ENCODE measurements at regions of chr4 and their contacts with region 1.

Region 1: GRCh38 chr4:52510939-52511565 is 148.0 kb downstream of the USP46 start:
- DNase-seq: no peak
- ATAC-seq: no peak
- H3K4me3 ChIP-seq: no peak overlapping the region
- H3K27ac ChIP-seq: no peak overlapping the region
- H3K4me1 ChIP-seq: no peaks in the 10 kb centered on the region
- H3K27me3 ChIP-seq: peaks cover 5% of the 10 kb centered on the region
- CTCF ChIP-seq: no peak
- POLR2A ChIP-seq: no peak
- RAD21 ChIP-seq: no peak

Region 2: DNA sequence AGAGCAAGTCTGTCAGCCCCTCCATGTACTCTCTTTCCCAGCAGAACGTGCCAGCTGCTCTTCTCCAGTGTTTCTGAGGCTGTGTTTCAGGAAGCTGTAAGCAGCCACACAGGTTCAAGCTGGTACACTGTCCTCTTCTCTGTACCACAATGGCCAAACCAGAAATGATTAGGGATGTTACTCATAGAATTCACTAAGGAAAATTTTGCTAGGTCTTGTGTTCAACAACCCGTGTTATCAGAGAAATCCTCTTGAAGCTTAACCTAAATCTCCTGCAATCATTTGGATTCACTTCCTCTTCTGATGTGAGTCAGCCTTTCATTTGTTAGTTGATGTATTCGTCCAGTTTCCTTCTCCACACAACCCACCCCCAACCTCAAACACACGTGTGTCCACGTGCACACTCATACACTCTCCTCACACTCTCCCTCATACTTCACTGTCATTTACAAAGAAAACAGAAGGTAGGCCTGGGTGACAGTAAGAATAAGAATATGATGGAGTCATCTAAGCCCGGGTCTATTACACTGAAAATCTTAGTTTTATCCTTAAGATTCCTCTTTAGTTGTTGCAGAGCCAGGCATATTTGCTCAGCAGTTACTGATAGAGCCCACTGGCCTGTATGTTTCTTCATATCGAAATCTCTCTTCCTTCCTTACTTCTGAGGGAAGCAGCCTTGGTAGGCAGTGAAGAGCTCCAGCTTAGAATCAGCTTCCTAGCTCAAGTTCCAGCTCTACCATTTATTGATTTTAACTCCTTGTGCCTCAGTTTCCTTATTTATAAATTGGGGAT is 604.7 kb before region 1 on chr4:
- CTCF ChIA-PET with region 1: no interaction called
- POLR2A ChIA-PET with region 1: no interaction called
- dilution Hi-C with region 1: no loop called
- in situ Hi-C with region 1: no loop called
- intact Hi-C with region 1: no loop called
- DNase-seq: peak; percentile 47
- ATAC-seq: peak; percentile 24; the same call in 1 of the 2 replicates
- H3K4me3 ChIP-seq: no peak overlapping the region
- H3K27ac ChIP-seq: peak overlapping the region; percentile 18; the same call in 1 of the 2 replicates
- H3K4me1 ChIP-seq: peaks cover 2% of the 10 kb centered on the region; the same call in 1 of the 2 replicates
- H3K27me3 ChIP-seq: no peaks in the 10 kb centered on the region
- CTCF ChIP-seq: no peak
- POLR2A ChIP-seq: no peak
- RAD21 ChIP-seq: no peak

Region 3: DNA sequence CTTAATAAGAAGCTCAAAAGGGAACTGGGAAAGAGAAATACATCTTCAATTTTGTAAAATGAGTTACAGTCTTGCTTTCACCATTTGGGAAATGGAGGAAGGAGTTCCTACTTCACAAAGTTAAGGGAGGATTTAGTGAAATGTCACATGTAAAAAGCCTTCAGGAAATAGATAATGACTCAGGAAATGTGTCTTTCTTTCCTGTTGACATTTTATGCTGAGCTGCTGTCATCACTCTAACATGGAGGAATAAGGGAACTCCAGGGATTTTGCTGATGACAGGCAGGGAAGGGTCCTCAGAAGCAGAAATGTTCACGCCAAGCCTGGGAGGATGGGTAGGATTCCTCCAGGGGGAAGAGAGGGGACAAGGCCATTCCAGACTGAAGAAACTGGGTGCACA is 103.0 kb before region 1 on chr4:
- CTCF ChIA-PET with region 1: no interaction called
- POLR2A ChIA-PET with region 1: no interaction called
- dilution Hi-C with region 1: no loop called
- in situ Hi-C with region 1: no loop called
- intact Hi-C with region 1: no loop called
- DNase-seq: no peak
- ATAC-seq: no peak
- H3K4me3 ChIP-seq: no peak overlapping the region
- H3K27ac ChIP-seq: no peak overlapping the region
- H3K4me1 ChIP-seq: no peaks in the 10 kb centered on the region
- H3K27me3 ChIP-seq: no peaks in the 10 kb centered on the region
- CTCF ChIP-seq: no peak
- POLR2A ChIP-seq: no peak
- RAD21 ChIP-seq: no peak

Region 4: DNA sequence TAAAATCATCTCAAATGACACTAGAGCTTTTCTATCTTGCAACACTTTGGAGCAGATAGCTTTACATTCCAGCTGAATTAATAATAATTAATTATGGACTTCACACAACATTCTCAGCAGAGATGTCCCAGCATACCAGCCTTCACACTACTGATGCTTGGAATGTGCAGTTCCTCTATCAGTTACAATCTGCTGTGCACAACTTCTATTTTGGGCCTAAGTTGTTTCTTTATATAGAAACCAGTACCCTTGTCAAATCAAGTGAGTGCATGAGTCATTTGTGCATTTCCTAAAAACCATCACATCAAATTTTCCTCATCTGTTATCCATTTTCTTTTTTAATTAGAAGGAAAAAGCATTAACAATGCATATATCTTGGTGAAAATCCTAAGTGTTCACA is 342.3 kb after region 1 on chr4:
- CTCF ChIA-PET with region 1: no interaction called
- POLR2A ChIA-PET with region 1: no interaction called
- dilution Hi-C with region 1: no loop called
- in situ Hi-C with region 1: no loop called
- intact Hi-C with region 1: no loop called
- DNase-seq: peak; percentile 41
- ATAC-seq: peak; percentile 83
- H3K4me3 ChIP-seq: no peak overlapping the region
- H3K27ac ChIP-seq: no peak overlapping the region
- H3K4me1 ChIP-seq: peaks cover 2% of the 10 kb centered on the region; the same call in 1 of the 2 replicates
- H3K27me3 ChIP-seq: no peaks in the 10 kb centered on the region
- CTCF ChIP-seq: no peak
- POLR2A ChIP-seq: no peak
- RAD21 ChIP-seq: no peak

Region 5: GRCh38 chr4:53089936-53090729 is 579.1 kb after region 1 on chr4:
- CTCF ChIA-PET with region 1: no interaction called
- POLR2A ChIA-PET with region 1: no interaction called
- dilution Hi-C with region 1: no loop called
- in situ Hi-C with region 1: no loop called
- intact Hi-C with region 1: no loop called
- DNase-seq: no peak
- ATAC-seq: peak; percentile 21; the same call in 1 of the 2 replicates
- H3K4me3 ChIP-seq: no peak overlapping the region
- H3K27ac ChIP-seq: no peak overlapping the region
- H3K4me1 ChIP-seq: no peaks in the 10 kb centered on the region
- H3K27me3 ChIP-seq: no peaks in the 10 kb centered on the region
- CTCF ChIP-seq: no peak
- POLR2A ChIP-seq: no peak
- RAD21 ChIP-seq: no peak

Region 6: GRCh38 chr4:54165438-54165837 is 1654.4 kb after region 1 on chr4:
- CTCF ChIA-PET with region 1: no interaction called
- POLR2A ChIA-PET with region 1: interaction called, 13 read pairs
- dilution Hi-C with region 1: no loop called
- in situ Hi-C with region 1: no loop called
- intact Hi-C with region 1: no loop called
- DNase-seq: peak; percentile 96
- ATAC-seq: peak; percentile 97
- H3K4me3 ChIP-seq: no peak overlapping the region
- H3K27ac ChIP-seq: peak overlapping the region; percentile 5; the same call in 1 of the 2 replicates
- H3K4me1 ChIP-seq: peaks cover 8% of the 10 kb centered on the region
- H3K27me3 ChIP-seq: no peaks in the 10 kb centered on the region
- CTCF ChIP-seq: no peak; the same call in 1 of the 2 replicates
- POLR2A ChIP-seq: no peak
- RAD21 ChIP-seq: 0 out of 2 replicates have a peak, but pooled peaks have one; percentile 14

Measured in IMR-90 (cell line).